Motor neuron (in vitro differentiated cells): ENCODE measurements at regions of chr16 and their contacts with region 1.

Region 1: DNA sequence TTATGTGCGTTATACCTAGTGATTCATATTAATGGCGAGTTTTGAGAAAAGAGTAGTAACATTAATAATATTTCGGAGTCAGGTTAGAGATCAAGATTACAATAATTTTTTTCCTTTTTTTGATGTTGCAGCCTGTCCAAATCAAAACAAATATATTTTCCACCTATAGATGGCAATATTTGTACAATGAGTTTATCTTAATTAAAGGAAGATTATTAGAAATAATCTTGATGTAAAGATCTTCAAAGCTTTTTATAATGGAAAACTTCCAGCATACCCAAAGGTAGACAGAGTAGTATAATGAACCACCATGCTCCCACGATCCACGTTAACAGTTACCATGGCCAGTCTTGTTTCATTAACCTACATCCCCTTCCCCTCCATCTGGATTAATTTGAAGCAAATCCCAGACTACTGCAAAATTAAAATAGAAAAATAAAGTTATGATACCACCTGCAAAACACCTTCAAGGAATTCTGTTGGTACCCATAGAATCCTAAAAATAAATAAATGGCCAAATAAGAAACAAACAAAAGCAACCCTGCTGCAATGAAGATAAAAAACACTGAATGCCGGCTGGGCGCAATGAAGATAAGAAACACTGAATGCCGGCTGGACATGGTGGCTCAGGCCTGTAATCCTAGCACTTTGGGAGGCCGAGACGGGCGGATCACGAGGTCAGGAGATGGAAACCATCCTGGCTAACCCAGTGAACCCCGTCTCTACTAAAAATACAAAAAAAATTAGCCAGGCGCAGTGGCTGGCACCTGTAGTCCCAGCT is 46.5 kb upstream of the GINS3 start:
- ATAC-seq: no peak
- H3K4me3 ChIP-seq: no peak overlapping the region
- H3K27ac ChIP-seq: no peak overlapping the region
- H3K4me1 ChIP-seq: no peaks in the 10 kb centered on the region

Region 2: DNA sequence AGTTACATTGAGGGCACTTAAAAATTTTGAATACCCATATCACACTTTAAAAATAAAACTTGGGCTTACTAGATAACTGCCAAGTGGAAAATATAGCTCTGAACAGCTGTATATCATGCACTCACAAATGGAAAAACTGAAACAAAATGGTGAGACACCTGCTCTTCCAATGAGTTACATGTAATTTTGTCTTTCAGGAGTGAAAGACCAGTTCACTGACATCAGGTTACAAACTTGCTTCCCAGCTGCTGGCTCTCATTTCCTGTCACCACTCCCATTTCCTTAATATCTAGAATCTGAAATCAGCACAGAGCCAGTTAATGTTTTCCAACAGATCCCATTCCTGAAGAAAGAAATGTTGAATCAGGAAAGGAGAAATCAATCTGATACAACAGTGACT is 158.7 kb before region 1 on chr16:
- in situ Hi-C with region 1: no loop called
- ATAC-seq: peak in 2 of 8 experiments; percentile 37 to 51
- H3K4me3 ChIP-seq: no peak overlapping the region
- H3K27ac ChIP-seq: no peak overlapping the region
- H3K4me1 ChIP-seq: peaks cover 0 to 5% of the 10 kb centered on the region in 2 donors

Region 3: DNA sequence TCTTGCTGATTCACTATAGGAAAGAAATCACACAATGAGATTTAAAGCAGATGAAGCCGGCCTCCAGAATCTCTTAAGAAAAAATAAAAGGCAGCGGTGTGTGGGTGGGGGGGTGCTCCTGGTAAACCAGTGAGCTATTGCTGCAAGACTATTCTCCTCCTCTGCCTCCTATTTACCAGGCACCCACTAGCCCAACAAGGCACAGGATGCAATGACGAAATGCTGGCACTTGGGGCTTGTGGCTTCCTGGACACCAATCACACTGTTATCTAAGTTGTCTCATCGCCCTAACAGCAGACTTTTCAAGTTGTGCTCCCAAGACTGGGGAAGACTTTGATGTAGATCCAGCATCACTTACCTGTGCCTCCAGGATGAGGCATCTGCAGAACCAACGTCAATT is 104.0 kb after region 1 on chr16:
- in situ Hi-C with region 1: no loop called
- ATAC-seq: no peak
- H3K4me3 ChIP-seq: no peak overlapping the region
- H3K27ac ChIP-seq: no peak overlapping the region
- H3K4me1 ChIP-seq: peaks cover 22 to 28% of the 10 kb centered on the region in 2 donors

Region 4: DNA sequence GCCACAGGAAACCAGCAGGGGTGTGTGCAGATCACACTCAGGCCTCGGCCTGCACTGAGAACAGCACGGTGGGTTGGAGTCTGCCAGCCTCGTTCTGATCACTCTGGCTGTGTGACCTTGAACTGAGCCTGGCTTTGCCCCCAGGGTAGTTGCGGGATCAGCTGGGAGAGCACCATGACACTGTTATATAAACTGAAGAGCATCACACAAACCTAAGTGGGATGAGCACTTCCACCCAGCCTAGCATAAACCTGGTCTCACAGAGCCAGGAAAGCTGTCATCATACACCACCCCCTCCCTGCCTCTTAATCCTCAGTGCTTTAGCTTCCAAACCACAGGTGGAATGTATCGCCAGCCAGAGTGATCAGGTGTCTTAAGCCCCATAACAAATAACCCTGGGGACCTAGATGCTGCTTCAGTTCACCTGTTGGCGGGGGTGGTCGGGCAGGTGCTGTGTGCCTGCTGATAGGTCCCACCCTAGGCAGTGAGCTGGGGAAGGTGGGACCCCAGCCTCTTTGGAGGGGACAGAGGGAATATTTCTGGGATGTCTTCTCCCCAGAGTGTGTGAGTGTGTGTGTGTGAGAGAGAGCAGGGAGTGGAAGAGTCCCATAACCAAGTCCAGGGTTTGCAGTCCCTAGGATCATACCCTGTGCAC is 125.7 kb after region 1 on chr16:
- in situ Hi-C with region 1: loop called in 3 of 9 experiments (anchors 10 to 25 kb)
- ATAC-seq: no peak
- H3K4me3 ChIP-seq: no peak overlapping the region
- H3K27ac ChIP-seq: no peak overlapping the region
- H3K4me1 ChIP-seq: no peaks in the 10 kb centered on the region

Region 5: GRCh38 chr16:58487566-58488351 is 142.0 kb after region 1 on chr16:
- in situ Hi-C with region 1: loop called in 4 of 9 experiments (anchors 10 to 25 kb)
- ATAC-seq: peak; percentile 85 to 99 (median 91)
- H3K4me3 ChIP-seq: no peak overlapping the region
- H3K27ac ChIP-seq: no peak overlapping the region
- H3K4me1 ChIP-seq: peaks cover 15 to 19% of the 10 kb centered on the region in 2 donors